ENCODE measurements at regions of chr1 and their contacts with region 1.

Region 1: GRCh38 chr1:63418101-63418500 is 50.7 kb downstream of the ALG6 start:
- DNase-seq: no peak
- H3K4me3 ChIP-seq: no peak overlapping the region
- H3K27me3 ChIP-seq: no peaks in the 10 kb centered on the region
- CTCF ChIP-seq: no peak

Region 2: DNA sequence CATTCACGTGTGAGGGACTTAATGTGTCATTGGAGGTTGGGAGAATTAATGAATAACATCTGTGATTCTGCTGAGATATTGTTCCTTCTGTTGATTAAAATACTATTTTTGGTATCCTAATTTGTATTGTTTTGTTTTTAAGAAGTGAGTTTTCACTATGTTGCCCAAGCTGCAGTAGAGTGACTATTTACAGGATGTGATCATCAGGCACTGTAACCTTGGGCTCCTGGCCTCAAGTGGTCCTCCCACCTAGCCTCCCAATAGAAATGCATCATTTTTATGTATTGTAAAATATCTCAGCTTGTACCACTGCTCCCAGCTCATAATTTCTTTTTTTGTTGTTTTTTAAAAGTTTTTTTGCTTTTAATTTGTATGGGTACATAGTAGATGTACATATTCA is 36.4 kb before region 1 on chr1:
- CTCF ChIA-PET with region 1: no interaction called
- POLR2A ChIA-PET with region 1: no interaction called
- DNase-seq: no peak
- H3K4me3 ChIP-seq: no peak overlapping the region
- H3K27me3 ChIP-seq: no peaks in the 10 kb centered on the region
- CTCF ChIP-seq: no peak

Region 3: DNA sequence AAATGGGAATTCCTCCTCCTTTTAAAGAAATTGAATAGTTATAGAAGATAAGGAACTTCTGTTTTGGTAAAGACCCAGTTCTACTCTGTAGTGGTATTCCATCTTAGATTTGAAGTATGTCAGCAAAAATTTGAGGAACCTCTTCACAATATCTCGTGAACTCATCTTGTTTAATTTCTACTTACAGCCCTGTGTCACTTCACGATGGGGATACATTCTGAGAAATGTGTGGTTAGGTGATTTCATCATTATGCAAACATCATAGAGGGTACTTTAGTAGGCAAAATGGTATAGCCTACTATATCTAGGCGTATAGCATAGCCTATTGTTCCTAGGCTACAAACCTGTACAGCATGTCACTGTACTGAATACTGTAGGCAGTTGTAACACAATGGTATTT is 14.7 kb before region 1 on chr1:
- CTCF ChIA-PET with region 1: interaction called, 3 read pairs
- POLR2A ChIA-PET with region 1: interaction called, 17 read pairs
- DNase-seq: no peak
- H3K4me3 ChIP-seq: no peak overlapping the region
- H3K27me3 ChIP-seq: no peaks in the 10 kb centered on the region
- CTCF ChIP-seq: no peak

Region 4: GRCh38 chr1:63643926-63644325 is 225.8 kb after region 1 on chr1:
- CTCF ChIA-PET with region 1: no interaction called
- POLR2A ChIA-PET with region 1: no interaction called
- DNase-seq: no peak
- H3K4me3 ChIP-seq: no peak overlapping the region
- H3K27me3 ChIP-seq: no peaks in the 10 kb centered on the region
- CTCF ChIP-seq: no peak

Measured in BJ (cell line).